ENCODE measurements at regions of chr3 and their contacts with region 1.

Region 1: DNA sequence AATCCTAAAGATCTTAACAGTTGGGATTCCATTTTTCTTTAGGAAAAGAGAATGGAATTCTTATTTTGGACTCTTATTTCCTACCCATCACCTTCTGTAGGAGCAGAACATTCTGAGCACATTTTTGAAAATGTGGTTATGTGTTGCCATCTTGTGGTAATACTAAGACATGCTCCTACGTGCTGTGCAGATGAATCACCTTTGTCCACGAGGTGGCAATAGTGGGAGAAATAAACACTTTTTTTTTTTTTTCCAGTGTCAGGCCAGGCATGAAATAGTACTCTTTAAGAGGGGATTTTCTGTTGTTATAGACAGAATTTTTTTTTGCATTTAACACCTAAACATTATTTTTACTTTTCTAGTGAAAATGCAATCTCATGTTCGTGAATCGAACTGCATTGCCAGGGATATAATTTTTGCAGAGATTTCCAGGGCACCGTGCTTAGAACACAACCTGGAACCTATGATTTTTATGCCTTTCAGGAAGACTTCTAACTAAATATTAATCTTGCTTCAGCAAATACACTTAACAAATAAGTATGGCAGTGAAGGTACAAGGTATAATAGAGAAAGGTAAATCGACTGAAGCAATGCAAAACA is 196.6 kb downstream of the GAP43 start:
- DNase-seq: peak; percentile 67
- H3K4me3 Mint-ChIP-seq: no peak overlapping the region
- H3K27ac Mint-ChIP-seq: no peak overlapping the region
- H3K4me1 Mint-ChIP-seq: no peaks in the 10 kb centered on the region
- H3K27me3 Mint-ChIP-seq: no peaks in the 10 kb centered on the region

Region 2: GRCh38 chr3:113981803-113982202 is 1838.1 kb before region 1 on chr3:
- CTCF ChIA-PET with region 1: no interaction called
- POLR2A ChIA-PET with region 1: no interaction called
- intact Hi-C with region 1: no loop called
- DNase-seq: no peak
- H3K4me3 Mint-ChIP-seq: no peak overlapping the region
- H3K27ac Mint-ChIP-seq: no peak overlapping the region
- H3K4me1 Mint-ChIP-seq: peaks cover 4% of the 10 kb centered on the region
- H3K27me3 Mint-ChIP-seq: no peaks in the 10 kb centered on the region

Region 3: GRCh38 chr3:115217678-115218451 is 602.0 kb before region 1 on chr3:
- CTCF ChIA-PET with region 1: interaction called, 6 read pairs
- POLR2A ChIA-PET with region 1: no interaction called
- intact Hi-C with region 1: loop called (anchors 5 kb)
- DNase-seq: no peak
- H3K4me3 Mint-ChIP-seq: no peak overlapping the region
- H3K27ac Mint-ChIP-seq: no peak overlapping the region
- H3K4me1 Mint-ChIP-seq: no peaks in the 10 kb centered on the region
- H3K27me3 Mint-ChIP-seq: peaks cover 2% of the 10 kb centered on the region

Region 4: DNA sequence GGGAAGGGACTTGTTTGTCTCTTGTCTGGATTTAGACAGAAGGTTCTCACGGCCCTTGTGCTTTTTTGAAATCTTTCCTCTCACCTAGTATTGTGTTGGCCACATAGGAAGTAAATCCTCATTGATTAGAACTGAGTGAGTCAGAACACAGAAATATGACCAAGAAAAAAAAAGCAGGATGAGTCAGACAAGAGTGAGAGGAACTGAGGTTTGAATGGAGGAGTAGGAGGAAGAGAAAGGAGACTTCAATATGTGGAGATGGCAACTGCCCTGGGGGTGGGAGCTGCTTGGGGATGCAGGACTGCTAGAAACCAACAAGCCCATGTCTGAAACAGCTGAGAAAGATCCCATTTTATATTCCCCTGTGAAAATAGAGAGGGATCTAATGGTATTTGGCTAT is 478.7 kb before region 1 on chr3:
- CTCF ChIA-PET with region 1: no interaction called
- POLR2A ChIA-PET with region 1: no interaction called
- intact Hi-C with region 1: loop called (anchors 10 kb)
- DNase-seq: peak; percentile 12
- H3K4me3 Mint-ChIP-seq: no peak overlapping the region
- H3K27ac Mint-ChIP-seq: no peak overlapping the region
- H3K4me1 Mint-ChIP-seq: peaks cover 4% of the 10 kb centered on the region
- H3K27me3 Mint-ChIP-seq: peaks cover 1% of the 10 kb centered on the region